Psoas muscle (tissue), 8 donors: ENCODE measurements at regions of chr5 and their contacts with region 1.

Region 1: DNA sequence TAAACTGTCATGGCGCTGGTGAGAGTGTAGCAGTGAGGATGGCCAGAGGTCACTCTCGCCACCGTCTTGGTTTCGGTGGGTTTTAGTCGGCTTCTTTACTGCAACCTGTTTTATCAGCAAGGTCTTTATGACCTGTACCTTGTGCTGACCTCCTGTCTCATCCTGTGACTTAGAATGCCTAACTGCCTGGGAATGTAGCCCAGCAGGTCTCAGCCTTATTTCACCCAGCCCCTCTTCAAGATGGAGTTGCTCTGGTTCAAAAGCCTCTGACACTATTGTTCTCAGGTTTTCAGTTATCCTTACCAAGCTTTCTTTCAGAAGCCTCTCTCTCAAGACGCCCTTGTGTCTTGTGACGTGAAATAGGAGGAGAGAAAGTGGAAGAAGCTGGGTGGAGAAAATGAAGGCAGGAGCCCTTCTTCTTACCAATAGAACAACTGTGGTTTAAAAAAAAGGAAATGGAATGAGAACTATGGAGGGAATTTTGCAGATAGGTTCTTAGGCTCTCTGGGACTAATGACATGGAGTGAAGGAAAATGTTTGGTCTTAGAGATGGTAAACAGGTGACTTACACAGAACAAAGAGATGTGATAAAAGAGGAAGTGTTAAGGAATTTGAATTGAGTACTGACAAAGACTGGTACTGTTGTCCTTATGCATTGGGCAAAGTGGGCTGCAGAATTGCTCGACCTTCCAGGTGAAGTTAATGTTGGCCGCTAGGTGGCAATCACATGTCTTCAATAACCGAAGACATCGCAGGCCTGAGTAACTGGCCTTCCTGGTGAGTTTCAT is 133.3 kb upstream of the RAI14 start:
- DNase-seq: peak in 1 of 2 donors; percentile 42
- ATAC-seq: peak in 3 of 4 donors; percentile 65 to 83 (median 70)
- H3K4me3 ChIP-seq: no peak overlapping the region
- H3K27ac ChIP-seq: no peak overlapping the region
- H3K4me1 ChIP-seq: no peaks in the 10 kb centered on the region
- H3K27me3 ChIP-seq: no peaks in the 10 kb centered on the region
- CTCF ChIP-seq: peak; percentile 72

Region 2: DNA sequence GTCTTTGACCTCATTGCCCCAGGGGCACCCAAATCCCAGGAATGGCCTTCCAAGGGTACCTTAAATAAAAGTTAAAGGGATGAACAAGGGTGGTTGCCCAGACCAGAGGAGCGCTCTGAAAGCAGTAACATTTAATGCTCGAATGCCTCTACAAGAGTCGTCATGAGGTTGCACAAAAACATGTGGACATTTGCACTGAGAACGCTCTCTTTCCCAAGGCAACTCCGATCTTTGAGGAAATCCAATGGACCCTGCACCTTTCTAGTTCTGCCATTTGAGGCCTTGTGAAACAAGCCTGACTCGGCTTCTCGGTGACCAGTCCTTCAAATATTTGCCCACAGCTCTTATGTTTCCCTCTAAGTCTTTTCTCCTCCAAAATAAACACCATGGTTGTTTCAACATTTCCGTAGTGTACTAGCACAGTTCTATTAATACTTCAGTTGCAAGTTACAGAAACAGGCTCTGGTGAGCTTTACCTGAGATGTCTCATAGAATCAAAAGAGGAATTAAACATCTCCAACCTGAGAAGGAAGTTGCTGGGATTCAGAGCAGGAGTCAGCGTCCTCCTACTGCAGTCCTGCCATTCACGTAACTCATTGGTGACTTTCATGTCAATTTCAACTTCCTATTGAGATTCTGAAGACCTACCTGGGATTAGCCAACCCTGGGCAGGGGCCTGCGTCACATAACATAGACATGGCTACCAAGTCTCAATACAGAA is 35.5 kb before region 1 on chr5:
- intact Hi-C with region 1: no loop called
- DNase-seq: no peak
- ATAC-seq: peak in 3 of 4 donors; percentile 43 to 54 (median 50)
- H3K4me3 ChIP-seq: no peak overlapping the region
- H3K27ac ChIP-seq: no peak overlapping the region
- H3K4me1 ChIP-seq: no peaks in the 10 kb centered on the region
- H3K27me3 ChIP-seq: peaks cover 0 to 3% (median 0%) of the 10 kb centered on the region in 3 donors
- CTCF ChIP-seq: no peak

Region 3: GRCh38 chr5:34898258-34898895 is 375.6 kb after region 1 on chr5:
- intact Hi-C with region 1: loop called (anchors 2 to 5 kb)
- DNase-seq: peak; percentile 39 to 56
- ATAC-seq: peak; percentile 51 to 84 (median 62)
- H3K4me3 ChIP-seq: no peak overlapping the region
- H3K27ac ChIP-seq: no peak overlapping the region
- H3K4me1 ChIP-seq: no peaks in the 10 kb centered on the region
- H3K27me3 ChIP-seq: no peaks in the 10 kb centered on the region
- CTCF ChIP-seq: peak; percentile 81

Region 4: GRCh38 chr5:35003018-35003957 is 480.5 kb after region 1 on chr5:
- intact Hi-C with region 1: loop called in 1 of 2 experiments (anchors 10 kb)
- DNase-seq: peak; percentile 43 to 57
- ATAC-seq: peak; percentile 32 to 62 (median 58)
- H3K4me3 ChIP-seq: no peak overlapping the region
- H3K27ac ChIP-seq: no peak overlapping the region
- H3K4me1 ChIP-seq: no peaks in the 10 kb centered on the region
- H3K27me3 ChIP-seq: peaks cover 0 to 4% (median 0%) of the 10 kb centered on the region in 3 donors
- CTCF ChIP-seq: peak; percentile 76